Adrenal gland (tissue), 19 donors: ENCODE measurements at regions of chr19 and their contacts with region 1.

Region 1: DNA sequence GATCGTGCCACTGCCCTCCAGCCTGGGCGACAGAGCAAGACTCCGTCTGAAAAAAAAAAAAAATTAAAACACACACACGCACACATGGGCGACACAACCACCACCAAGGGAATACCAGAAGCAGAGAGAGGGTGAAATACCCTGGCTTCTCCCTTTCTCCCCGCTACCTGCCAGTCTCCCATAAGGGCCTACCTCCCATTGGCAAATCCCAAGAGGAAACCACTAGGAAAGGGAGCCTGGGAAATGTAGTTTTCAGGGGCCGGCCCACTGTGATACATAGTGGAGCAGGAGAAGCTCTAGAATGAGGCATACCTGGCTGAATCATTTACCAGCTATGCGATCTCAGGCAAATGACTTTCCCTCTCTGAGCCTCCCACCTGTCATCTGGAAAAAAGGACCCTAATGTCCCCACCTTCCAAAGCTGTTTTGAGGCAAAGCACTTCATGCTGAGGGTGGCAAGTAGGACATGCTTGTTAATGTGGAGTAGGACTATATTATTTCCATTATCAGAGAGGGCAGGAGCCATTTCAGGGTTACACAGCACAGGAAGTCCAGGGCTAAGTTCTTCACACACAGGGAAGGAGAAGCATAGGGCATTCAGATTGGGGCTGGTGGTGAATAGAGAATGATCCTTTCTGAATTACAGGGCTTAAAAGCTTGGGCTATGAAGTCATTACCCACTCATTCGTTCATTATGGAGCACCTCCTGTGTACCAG is 14.3 kb upstream of the HNRNPUL1 start:
- DNase-seq: no peak
- H3K4me3 ChIP-seq: no peak overlapping the region
- H3K27ac ChIP-seq: no peak overlapping the region
- H3K4me1 ChIP-seq: no peaks in the 10 kb centered on the region
- H3K27me3 ChIP-seq: no peaks in the 10 kb centered on the region
- CTCF ChIP-seq: no peak
- POLR2A ChIP-seq: no peak

Region 2: GRCh38 chr19:40933034-40933433 is 316.8 kb before region 1 on chr19:
- intact Hi-C with region 1: no loop called
- DNase-seq: no peak
- H3K4me3 ChIP-seq: no peak overlapping the region
- H3K27ac ChIP-seq: no peak overlapping the region
- H3K4me1 ChIP-seq: no peaks in the 10 kb centered on the region
- H3K27me3 ChIP-seq: no peaks in the 10 kb centered on the region
- CTCF ChIP-seq: no peak
- POLR2A ChIP-seq: no peak

Region 3: DNA sequence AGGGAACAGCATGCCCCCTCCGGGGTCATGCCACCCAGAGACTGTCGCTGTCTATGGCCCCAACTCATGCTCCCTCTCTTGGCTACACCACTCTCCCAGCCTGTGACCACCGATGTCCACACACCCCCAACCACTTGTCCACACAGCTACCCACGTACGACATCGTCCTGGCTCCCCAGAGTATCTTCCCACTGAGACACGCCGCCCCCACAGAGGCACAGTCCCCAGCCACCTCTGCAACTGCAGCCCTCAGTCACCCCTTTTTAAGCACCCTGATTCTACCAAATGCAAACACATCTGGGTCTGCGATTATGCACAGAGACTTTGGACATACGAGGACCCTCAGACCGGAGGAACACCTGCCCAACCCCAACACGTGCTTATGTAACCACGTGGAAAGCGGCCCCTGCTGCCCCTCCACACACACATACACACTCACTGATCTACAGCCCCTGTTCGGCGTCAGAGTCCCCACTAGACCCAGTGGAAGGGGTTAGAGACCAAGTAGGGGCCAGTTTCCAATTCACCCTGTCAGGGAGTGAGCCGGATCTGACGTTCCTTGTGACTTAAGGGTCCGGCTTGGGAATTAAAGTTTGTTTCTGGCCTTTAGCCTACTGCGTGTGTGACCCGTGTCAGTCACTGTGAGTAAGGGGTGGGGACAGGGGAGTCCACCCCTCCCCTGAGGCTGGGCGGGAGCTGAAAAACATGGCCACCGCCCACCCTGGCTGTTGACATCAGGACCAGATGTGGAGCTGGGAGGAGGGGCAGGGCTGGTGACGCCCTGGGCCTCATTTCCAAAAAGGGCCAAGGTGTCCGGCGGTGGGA is 42.7 kb before region 1 on chr19:
- intact Hi-C with region 1: loop called in 1 of 2 experiments (anchors 5 kb)
- DNase-seq: peak in 1 of 7 donors; percentile 28
- H3K4me3 ChIP-seq: no peak overlapping the region
- H3K27ac ChIP-seq: peak overlapping the region in 1 of 5 donors; percentile 49
- H3K4me1 ChIP-seq: no peaks in the 10 kb centered on the region
- H3K27me3 ChIP-seq: no peaks in the 10 kb centered on the region
- CTCF ChIP-seq: no peak
- POLR2A ChIP-seq: no peak

Region 4: GRCh38 chr19:41310033-41310758 is 60.3 kb after region 1 on chr19 and contains the start of gene CCDC97:
- intact Hi-C with region 1: no loop called
- DNase-seq: peak; percentile 83 to 90 (median 86)
- H3K4me3 ChIP-seq: peak within 1 kb of the TSS; percentile 71 to 84 (median 79)
- H3K27ac ChIP-seq: peak within 1 kb of the TSS; percentile 91 to 99 (median 96)
- H3K4me1 ChIP-seq: peaks cover 21 to 37% of the 10 kb centered on the region in 2 donors
- H3K27me3 ChIP-seq: no peaks in the 10 kb centered on the region
- CTCF ChIP-seq: peak in 1 of 6 experiments; percentile 15
- POLR2A ChIP-seq: peak; percentile 59 to 70
- total RNA-seq, gene CCDC97: 8.2 to 25.6 (median 18.9) TPM